ENCODE measurements at regions of chr9 and their contacts with region 1.

Region 1: GRCh38 chr9:114082017-114082762 is 4.1 kb upstream of the AMBP start:
- DNase-seq: peak in 1 of 2 experiments; percentile 97
- H3K4me3 ChIP-seq: no peak overlapping the region
- H3K27ac ChIP-seq: no peak overlapping the region
- H3K4me1 ChIP-seq: peaks cover 0 to 6% (median 3%) of the 10 kb centered on the region in 4 experiments; a peak in 4 of 7 replicates
- H3K27me3 ChIP-seq: peaks cover 0 to 3% (median under 1%) of the 10 kb centered on the region in 4 experiments; a peak in 3 of 7 replicates
- CTCF ChIP-seq: peak; percentile 83 to 96 (median 94)
- EP300 ChIP-seq: no peak
- POLR2A ChIP-seq: no peak
- RAD21 ChIP-seq: peak; percentile 94

Region 2: DNA sequence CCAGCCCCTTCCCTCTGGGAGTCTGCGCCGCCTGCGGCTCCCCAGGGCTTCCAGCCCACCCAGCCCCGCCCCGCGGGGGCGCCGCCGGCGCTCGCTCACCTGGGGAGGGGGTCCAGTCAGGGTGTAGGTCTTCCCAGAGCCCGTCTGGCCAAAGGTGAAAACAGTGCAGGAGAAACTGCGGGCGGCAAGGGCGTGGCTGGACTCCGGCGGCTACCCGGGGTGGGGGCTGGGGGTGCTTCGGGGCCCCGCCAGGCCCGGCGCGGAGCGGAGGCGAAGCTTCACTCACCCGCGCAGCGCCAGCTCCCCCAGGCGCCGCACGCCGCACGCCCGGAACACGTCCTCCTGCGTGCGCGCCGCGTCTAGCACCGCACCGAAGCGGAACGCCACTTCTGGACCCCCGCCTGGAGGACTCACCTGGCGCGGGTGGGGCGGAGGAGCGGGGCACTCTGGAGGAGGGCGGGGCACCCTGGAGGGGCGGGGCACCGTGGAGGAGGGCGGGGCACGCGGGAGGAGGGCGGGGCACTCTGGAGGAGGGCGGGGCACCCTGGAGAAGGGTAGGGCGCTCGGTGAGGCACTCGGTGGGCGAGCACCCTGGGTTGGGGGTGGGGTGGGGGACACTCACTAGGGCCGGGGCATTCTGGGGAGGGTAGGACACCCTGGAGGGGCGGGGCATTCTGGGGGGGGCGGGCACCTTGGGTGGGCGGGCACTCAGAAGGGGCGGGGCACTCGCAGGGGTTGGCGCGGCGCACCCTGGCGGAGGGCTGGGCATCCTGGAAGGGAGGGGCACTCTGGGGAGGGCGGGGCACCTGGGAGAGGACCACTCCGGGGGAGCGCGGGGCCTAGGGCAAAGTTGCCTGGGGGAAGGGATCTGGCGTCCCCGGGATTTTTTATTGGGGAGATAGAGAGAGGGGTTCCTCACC is 16.1 kb after region 1 on chr9:
- CTCF ChIA-PET with region 1: interaction called, 144 read pairs
- POLR2A ChIA-PET with region 1: interaction called, 6 read pairs
- DNase-seq: peak in 1 of 2 experiments; percentile 88
- H3K4me3 ChIP-seq: peak overlapping the region; percentile 58 to 84 (median 62)
- H3K27ac ChIP-seq: no peak overlapping the region
- H3K4me1 ChIP-seq: peaks cover 0 to 16% (median 10%) of the 10 kb centered on the region in 4 experiments; a peak in 6 of 7 replicates
- H3K27me3 ChIP-seq: peaks cover 2 to 27% (median 19%) of the 10 kb centered on the region in 4 experiments
- CTCF ChIP-seq: peak in 1 of 3 experiments; percentile 33; a peak in 1 of 4 replicates
- EP300 ChIP-seq: no peak
- POLR2A ChIP-seq: no peak
- RAD21 ChIP-seq: no peak

Region 3: GRCh38 chr9:114263853-114264510 is 181.8 kb after region 1 on chr9:
- CTCF ChIA-PET with region 1: interaction called, 24 read pairs
- POLR2A ChIA-PET with region 1: no interaction called
- DNase-seq: peak in 1 of 2 experiments; percentile 79
- H3K4me3 ChIP-seq: no peak overlapping the region
- H3K27ac ChIP-seq: no peak overlapping the region
- H3K4me1 ChIP-seq: peaks cover 0 to 3% (median 0%) of the 10 kb centered on the region in 4 experiments; a peak in 2 of 7 replicates
- H3K27me3 ChIP-seq: no peaks in the 10 kb centered on the region
- CTCF ChIP-seq: peak; percentile 26 to 45 (median 33); a peak in 3 of 4 replicates
- EP300 ChIP-seq: no peak
- POLR2A ChIP-seq: no peak
- RAD21 ChIP-seq: peak; percentile 54 to 57

Region 4: GRCh38 chr9:114285166-114285867 is 203.1 kb after region 1 on chr9:
- CTCF ChIA-PET with region 1: interaction called, 100 read pairs
- POLR2A ChIA-PET with region 1: no interaction called
- DNase-seq: no peak
- H3K4me3 ChIP-seq: no peak overlapping the region
- H3K27ac ChIP-seq: no peak overlapping the region
- H3K4me1 ChIP-seq: peaks cover 0 to 20% (median 4%) of the 10 kb centered on the region in 4 experiments; a peak in 5 of 7 replicates
- H3K27me3 ChIP-seq: no peaks in the 10 kb centered on the region
- CTCF ChIP-seq: no peak
- EP300 ChIP-seq: no peak
- POLR2A ChIP-seq: no peak
- RAD21 ChIP-seq: no peak

Measured in H1 (cell line).